BJ (cell line): ENCODE measurements at regions of chr7 and their contacts with region 1.

Region 1: DNA sequence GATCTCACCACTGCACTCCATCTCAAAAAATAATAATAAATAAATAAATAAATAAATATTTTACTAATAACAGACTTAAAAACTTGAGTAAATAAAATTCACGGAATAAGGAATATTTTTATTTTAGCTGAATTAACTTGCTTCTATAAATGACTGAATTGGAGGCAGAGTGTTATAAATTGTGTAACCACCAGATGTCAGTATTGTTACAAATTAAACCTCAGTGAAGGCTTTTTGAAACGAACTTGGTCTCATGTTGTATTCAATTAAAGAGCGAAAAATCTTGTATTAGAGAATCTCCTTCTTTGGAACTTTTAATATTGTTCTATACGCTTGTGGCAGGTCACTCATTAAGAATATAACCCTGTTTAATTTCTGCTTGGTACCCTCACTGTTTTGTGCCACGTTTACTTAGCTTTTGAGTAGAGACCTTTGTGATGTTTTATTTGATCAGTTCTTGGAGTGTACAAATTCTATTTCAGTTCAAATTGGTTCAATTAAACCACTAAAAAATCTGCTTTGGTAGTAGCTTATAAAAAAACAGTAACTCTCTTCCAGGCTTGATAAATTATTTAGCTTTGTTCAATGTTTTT is 45.6 kb upstream of the SCIN start:
- DNase-seq: peak; percentile 7
- H3K4me3 ChIP-seq: no peak overlapping the region
- H3K27me3 ChIP-seq: no peaks in the 10 kb centered on the region
- CTCF ChIP-seq: peak; percentile 45

Region 2: GRCh38 chr7:11817111-11817740 is 707.7 kb before region 1 on chr7:
- CTCF ChIA-PET with region 1: no interaction called
- POLR2A ChIA-PET with region 1: no interaction called
- DNase-seq: no peak
- H3K4me3 ChIP-seq: no peak overlapping the region
- H3K27me3 ChIP-seq: no peaks in the 10 kb centered on the region
- CTCF ChIP-seq: no peak

Region 3: GRCh38 chr7:12549106-12549505 is 24.2 kb after region 1 on chr7:
- CTCF ChIA-PET with region 1: no interaction called
- POLR2A ChIA-PET with region 1: no interaction called
- DNase-seq: no peak
- H3K4me3 ChIP-seq: no peak overlapping the region
- H3K27me3 ChIP-seq: no peaks in the 10 kb centered on the region
- CTCF ChIP-seq: no peak

Region 4: DNA sequence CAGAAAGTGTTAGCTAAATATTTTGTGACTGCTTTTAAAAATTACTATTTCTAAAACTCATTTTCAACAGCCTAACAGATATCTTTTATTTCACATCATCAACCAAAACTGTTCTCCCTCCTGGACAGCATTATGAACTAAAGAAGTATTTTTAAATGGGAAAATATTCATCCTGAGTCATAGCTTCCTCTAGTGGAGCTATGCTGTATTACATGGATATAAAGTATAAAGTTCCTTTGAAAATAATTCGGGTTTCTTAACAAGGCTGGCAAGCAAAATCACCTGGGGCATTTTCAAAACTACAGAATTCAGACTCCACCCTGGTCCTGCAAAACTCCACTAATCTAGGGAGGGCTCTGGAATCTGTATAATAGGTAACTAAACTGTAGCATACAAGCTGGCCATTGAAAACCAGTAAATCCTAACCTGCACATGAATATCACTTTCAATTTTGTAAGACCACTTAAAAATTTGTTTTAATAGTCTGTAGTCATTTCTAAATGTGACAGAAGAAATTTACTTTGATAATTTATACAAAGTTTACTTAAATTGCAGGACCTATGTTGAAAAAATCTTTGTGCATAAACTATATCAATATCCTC is 99.1 kb after region 1 on chr7:
- CTCF ChIA-PET with region 1: interaction called, 35 read pairs
- POLR2A ChIA-PET with region 1: interaction called, 4 read pairs
- DNase-seq: no peak
- H3K4me3 ChIP-seq: no peak overlapping the region
- H3K27me3 ChIP-seq: no peaks in the 10 kb centered on the region
- CTCF ChIP-seq: peak; percentile 75

Region 5: GRCh38 chr7:13262929-13263530 is 738.1 kb after region 1 on chr7:
- CTCF ChIA-PET with region 1: interaction called, 13 read pairs
- POLR2A ChIA-PET with region 1: no interaction called
- DNase-seq: no peak
- H3K4me3 ChIP-seq: no peak overlapping the region
- H3K27me3 ChIP-seq: no peaks in the 10 kb centered on the region
- CTCF ChIP-seq: peak; percentile 49